ENCODE measurements at regions of chr22 and their contacts with region 1.

Region 1: DNA sequence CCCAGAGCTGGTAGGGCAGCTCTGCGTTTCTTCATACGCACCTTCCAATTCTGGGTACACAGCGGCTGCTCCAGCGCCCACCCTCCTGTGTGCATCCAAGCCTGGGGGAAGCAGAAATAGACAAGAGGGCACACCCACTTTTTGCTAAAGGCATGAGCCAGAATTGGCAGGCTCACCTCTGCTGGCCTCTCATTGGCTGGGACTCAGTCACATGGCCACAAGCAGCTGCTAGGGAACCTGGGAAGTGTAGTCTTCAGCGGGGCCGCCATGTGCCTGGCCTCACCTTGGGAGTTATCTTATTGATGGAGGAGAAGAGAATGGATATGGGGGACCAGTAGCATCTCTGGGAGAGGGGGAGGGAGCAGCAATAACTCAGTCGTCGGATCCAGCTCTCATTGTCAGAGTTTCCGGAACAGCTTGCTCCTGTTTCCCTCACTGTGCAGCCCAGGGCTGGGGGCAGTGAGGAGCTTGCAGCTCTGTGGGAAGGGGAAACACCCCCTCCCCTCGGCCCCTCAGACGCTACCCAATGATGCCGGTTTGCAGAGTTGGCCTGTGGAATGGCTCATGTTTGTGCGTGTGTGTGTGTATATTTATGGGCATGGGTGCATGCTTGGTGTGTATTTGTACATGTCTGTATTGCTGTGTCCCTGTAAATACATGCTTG is 11.8 kb upstream of the MIEF1 start:
- DNase-seq: peak; percentile 90 to 91
- ATAC-seq: peak; percentile 83
- H3K4me3 ChIP-seq: no peak overlapping the region
- H3K27ac ChIP-seq: no peak overlapping the region
- H3K4me1 ChIP-seq: no peaks in the 10 kb centered on the region
- H3K27me3 ChIP-seq: no peaks in the 10 kb centered on the region

Region 2: GRCh38 chr22:39223201-39223641 is 267.0 kb before region 1 on chr22:
- intact Hi-C with region 1: no loop called
- DNase-seq: peak; percentile 24 to 42
- ATAC-seq: no peak
- H3K4me3 ChIP-seq: no peak overlapping the region
- H3K27ac ChIP-seq: no peak overlapping the region
- H3K4me1 ChIP-seq: no peaks in the 10 kb centered on the region
- H3K27me3 ChIP-seq: no peaks in the 10 kb centered on the region

Region 3: GRCh38 chr22:39405346-39406085 is 84.8 kb before region 1 on chr22:
- intact Hi-C with region 1: loop called in 1 of 2 experiments (anchors 10 kb)
- DNase-seq: peak; percentile 71 to 85
- ATAC-seq: peak; percentile 60
- H3K4me3 ChIP-seq: peak overlapping the region in 1 of 2 donors; percentile 17
- H3K27ac ChIP-seq: peak overlapping the region in 1 of 2 donors; percentile 6
- H3K4me1 ChIP-seq: no peaks in the 10 kb centered on the region
- H3K27me3 ChIP-seq: no peaks in the 10 kb centered on the region

Region 4: DNA sequence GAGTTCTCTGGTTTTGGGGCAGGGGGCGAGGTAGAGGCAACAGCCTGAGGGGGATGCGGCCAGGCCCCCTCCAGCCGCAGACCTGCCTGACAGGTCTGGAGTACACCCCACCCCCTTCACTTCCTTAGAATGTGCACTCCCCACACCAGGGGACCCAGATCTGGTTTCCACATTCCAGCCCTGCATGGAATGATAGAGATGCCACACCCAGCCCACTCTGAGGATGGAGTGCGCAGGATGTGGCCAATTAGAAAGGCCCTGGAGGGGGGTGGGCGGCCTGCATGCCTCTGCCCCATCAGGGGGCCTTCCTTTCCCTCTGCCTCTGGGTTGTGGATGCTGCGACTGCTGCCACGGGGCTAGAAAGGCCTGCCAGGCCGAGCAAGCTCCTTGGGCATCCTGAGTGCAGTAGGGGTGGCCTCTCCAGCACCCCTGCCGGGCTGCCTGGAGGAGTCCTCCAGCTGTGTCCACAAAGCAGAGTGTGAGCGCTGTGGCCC is 61.6 kb before region 1 on chr22:
- intact Hi-C with region 1: no loop called
- DNase-seq: peak in 1 of 2 donors; percentile 66
- ATAC-seq: no peak
- H3K4me3 ChIP-seq: no peak overlapping the region
- H3K27ac ChIP-seq: no peak overlapping the region
- H3K4me1 ChIP-seq: peaks cover 0 to 5% of the 10 kb centered on the region in 2 donors
- H3K27me3 ChIP-seq: no peaks in the 10 kb centered on the region

Region 5: GRCh38 chr22:39439170-39439569 is 51.1 kb before region 1 on chr22:
- intact Hi-C with region 1: loop called in 1 of 2 experiments (anchors 5 kb)
- DNase-seq: no peak
- ATAC-seq: no peak
- H3K4me3 ChIP-seq: no peak overlapping the region
- H3K27ac ChIP-seq: no peak overlapping the region
- H3K4me1 ChIP-seq: peaks cover 0 to 1% of the 10 kb centered on the region in 2 donors
- H3K27me3 ChIP-seq: no peaks in the 10 kb centered on the region

Region 6: DNA sequence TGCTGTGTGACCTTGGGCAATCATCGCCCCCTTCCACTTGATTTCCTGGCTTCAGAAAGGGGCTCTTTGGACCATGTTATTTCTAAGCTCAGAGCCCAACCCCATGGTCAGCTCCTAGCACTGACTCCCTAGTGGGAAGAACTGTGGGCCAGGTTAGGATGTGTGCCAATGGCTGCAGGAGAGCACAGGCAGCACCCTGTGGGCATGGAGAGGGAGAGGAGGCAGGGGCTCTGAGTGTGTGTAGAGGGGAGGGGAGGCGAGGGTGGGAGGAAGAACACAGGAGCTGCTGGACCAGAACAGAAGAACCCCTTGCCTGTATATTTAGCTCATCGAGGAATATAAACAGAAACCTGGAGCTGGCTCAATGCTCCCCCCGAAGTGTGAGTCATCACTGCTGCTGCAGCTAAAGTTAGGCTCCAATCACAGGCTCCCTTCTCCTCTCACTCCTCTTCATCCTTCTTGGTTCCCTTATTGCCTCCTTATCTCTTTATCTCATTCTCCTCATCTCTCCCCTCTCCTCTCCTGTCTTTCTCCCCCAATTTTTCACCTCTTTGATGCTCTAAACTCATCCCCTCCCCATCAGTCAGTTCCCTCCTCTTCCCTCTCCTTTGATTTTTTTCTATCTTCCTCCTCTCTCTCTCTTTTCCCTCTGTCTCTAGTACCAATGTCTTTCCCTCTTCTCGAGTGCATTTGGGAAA is 56.8 kb after region 1 on chr22:
- intact Hi-C with region 1: no loop called
- DNase-seq: no peak
- ATAC-seq: no peak
- H3K4me3 ChIP-seq: no peak overlapping the region
- H3K27ac ChIP-seq: no peak overlapping the region
- H3K4me1 ChIP-seq: no peaks in the 10 kb centered on the region
- H3K27me3 ChIP-seq: no peaks in the 10 kb centered on the region

Measured in aorta (tissue), 5 donors.